CD8-positive, alpha-beta T cell (primary cell): ENCODE measurements at regions of chr17 and their contacts with region 1.

Region 1: DNA sequence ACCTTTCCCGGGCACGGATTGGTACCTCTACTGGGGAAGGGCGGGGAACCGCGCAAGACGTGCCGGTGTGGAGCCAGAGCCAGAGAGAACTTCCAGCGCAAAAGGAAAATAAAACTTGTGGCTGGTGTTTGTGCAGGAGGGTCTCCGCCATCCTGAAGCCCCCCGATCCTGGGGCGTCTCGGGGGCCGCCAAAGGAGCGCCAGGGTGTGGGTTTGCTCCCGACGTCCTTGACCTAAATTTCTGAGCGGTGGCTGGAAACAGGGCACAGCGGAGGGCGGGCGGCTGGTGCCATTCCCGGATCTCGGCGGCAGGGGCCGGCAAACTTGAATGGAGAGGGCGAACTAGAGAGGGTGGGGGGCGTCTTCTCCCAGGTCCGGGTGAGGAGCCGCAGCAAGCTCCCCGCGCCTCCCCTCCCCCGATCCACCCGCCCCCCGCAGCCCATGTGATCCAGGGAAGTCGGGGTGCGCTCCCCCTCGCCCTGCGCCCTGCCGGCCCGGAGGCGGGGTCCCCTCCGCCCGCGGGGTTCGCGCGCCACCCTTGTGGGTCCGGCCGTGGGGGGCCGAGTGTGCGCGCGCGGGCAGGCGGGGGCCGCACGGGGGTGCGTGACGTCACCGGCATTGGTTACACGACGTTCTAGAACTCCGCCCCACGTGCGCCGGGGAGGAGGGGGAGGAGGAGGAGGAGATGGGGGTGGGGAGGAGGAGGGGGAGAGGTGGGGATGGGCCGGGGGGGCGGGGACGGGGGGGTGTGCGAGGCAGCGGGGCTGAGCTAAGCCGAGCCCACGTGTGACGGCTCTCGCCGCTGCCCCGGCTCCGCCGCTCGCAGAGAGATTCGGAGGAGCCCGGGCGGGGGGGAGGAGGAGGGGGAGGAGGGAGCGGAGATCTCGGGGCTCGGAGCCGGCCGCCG is at the start of gene MSI2:
- DNase-seq: peak; percentile 87 to 97 (median 92)
- ATAC-seq: peak; percentile 76
- H3K4me3 ChIP-seq: peak within 1 kb of the TSS; percentile 73 to 81
- H3K4me3 Mint-ChIP-seq: peak within 1 kb of the TSS; percentile 92
- H3K27ac ChIP-seq: peak within 1 kb of the TSS; percentile 64 to 84
- H3K27ac Mint-ChIP-seq: peak within 1 kb of the TSS; percentile 93
- H3K4me1 ChIP-seq: peaks cover 37% of the 10 kb centered on the region
- H3K4me1 Mint-ChIP-seq: peaks cover 49% of the 10 kb centered on the region
- H3K27me3 ChIP-seq: no peaks in the 10 kb centered on the region
- H3K27me3 Mint-ChIP-seq: no peaks in the 10 kb centered on the region
- CTCF ChIP-seq: no peak
- total RNA-seq, gene MSI2: 130 to 135 TPM

Region 2: DNA sequence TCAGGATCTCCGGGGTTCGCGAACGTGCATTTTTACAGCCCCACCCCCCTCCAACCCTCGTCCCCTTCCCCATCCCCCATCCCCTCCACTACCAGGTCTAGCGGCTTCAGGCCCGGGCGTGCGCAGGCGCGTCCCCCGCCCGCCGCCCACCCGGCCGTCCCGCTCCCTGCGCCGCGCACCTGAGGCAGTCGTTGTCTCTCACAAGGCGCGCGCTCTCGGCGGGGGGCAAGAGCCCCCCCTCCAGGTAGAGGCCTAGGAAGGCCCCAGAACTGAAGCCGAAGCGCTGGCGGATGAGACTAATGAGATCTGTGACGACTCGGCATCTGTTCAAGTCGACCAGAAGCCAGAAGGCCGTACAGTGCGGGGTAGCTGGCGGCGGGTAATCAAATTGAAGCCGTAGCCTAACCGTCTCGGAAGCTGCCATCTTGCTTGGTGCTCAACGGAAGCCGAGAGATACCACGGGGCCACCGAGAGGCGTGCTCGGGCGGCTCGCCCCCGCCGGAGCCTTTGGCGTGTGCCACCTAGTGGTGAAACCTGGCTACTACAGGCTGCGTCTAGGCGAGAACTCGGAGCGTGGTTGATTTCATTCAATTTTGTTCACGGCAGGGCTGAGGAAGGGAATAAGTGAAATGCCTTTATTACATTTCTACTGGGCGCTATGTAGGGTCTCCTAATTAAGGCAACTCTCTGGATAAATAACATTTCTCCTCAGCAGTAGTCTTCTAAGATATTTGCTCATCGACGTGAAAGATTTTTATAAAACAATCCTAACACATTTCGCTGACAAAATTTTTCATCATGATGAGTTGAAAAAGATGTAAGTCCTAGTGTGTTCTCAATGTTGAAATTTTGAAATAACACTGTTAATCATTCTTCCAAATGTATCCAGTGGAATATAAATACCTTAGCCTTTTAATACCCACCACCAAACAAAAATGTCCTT is 295.2 kb before region 1 on chr17 and contains the start of gene COIL:
- CTCF ChIA-PET with region 1: no interaction called
- POLR2A ChIA-PET with region 1: no interaction called
- intact Hi-C with region 1: loop called in 1 of 2 experiments (anchors 5 kb)
- DNase-seq: peak; percentile 85 to 96 (median 93)
- ATAC-seq: peak; percentile 98
- H3K4me3 ChIP-seq: peak within 1 kb of the TSS; percentile 65 to 89
- H3K4me3 Mint-ChIP-seq: peak within 1 kb of the TSS; percentile 89
- H3K27ac ChIP-seq: peak within 1 kb of the TSS; percentile 78 to 79
- H3K27ac Mint-ChIP-seq: peak within 1 kb of the TSS; percentile 96
- H3K4me1 ChIP-seq: peaks cover 22% of the 10 kb centered on the region
- H3K4me1 Mint-ChIP-seq: peaks cover 25% of the 10 kb centered on the region
- H3K27me3 ChIP-seq: no peaks in the 10 kb centered on the region
- H3K27me3 Mint-ChIP-seq: no peaks in the 10 kb centered on the region
- CTCF ChIP-seq: peak; percentile 99
- total RNA-seq, gene COIL: 24.1 to 24.3 TPM

Region 3: GRCh38 chr17:57294629-57295535 is 38.9 kb after region 1 on chr17:
- CTCF ChIA-PET with region 1: no interaction called
- POLR2A ChIA-PET with region 1: no interaction called
- intact Hi-C with region 1: loop called (anchors 1 to 5 kb)
- DNase-seq: peak in 8 of 9 experiments; percentile 39 to 69 (median 56)
- ATAC-seq: peak; percentile 95
- H3K4me3 ChIP-seq: no peak overlapping the region
- H3K4me3 Mint-ChIP-seq: peak overlapping the region; percentile 36
- H3K27ac ChIP-seq: no peak overlapping the region
- H3K27ac Mint-ChIP-seq: peak overlapping the region; percentile 83
- H3K4me1 ChIP-seq: peaks cover 20% of the 10 kb centered on the region
- H3K4me1 Mint-ChIP-seq: peaks cover 43% of the 10 kb centered on the region
- H3K27me3 ChIP-seq: no peaks in the 10 kb centered on the region
- H3K27me3 Mint-ChIP-seq: no peaks in the 10 kb centered on the region
- CTCF ChIP-seq: no peak

Region 4: GRCh38 chr17:57328093-57328882 is 72.3 kb after region 1 on chr17:
- CTCF ChIA-PET with region 1: no interaction called
- POLR2A ChIA-PET with region 1: no interaction called
- intact Hi-C with region 1: no loop called
- DNase-seq: no peak
- ATAC-seq: no peak
- H3K4me3 ChIP-seq: no peak overlapping the region
- H3K4me3 Mint-ChIP-seq: no peak overlapping the region
- H3K27ac ChIP-seq: no peak overlapping the region
- H3K27ac Mint-ChIP-seq: no peak overlapping the region
- H3K4me1 ChIP-seq: no peaks in the 10 kb centered on the region
- H3K4me1 Mint-ChIP-seq: peaks cover 34% of the 10 kb centered on the region
- H3K27me3 ChIP-seq: no peaks in the 10 kb centered on the region
- H3K27me3 Mint-ChIP-seq: no peaks in the 10 kb centered on the region
- CTCF ChIP-seq: no peak

Region 5: GRCh38 chr17:57671667-57672632 is 415.9 kb after region 1 on chr17:
- CTCF ChIA-PET with region 1: interaction called, 6 read pairs
- POLR2A ChIA-PET with region 1: no interaction called
- intact Hi-C with region 1: loop called (anchors 5 kb)
- DNase-seq: peak; percentile 46 to 87 (median 75)
- ATAC-seq: peak; percentile 87
- H3K4me3 ChIP-seq: no peak overlapping the region
- H3K4me3 Mint-ChIP-seq: peak overlapping the region; percentile 54
- H3K27ac ChIP-seq: peak overlapping the region; percentile 28 to 45
- H3K27ac Mint-ChIP-seq: peak overlapping the region; percentile 91
- H3K4me1 ChIP-seq: peaks cover 36% of the 10 kb centered on the region
- H3K4me1 Mint-ChIP-seq: peaks cover 45% of the 10 kb centered on the region
- H3K27me3 ChIP-seq: no peaks in the 10 kb centered on the region
- H3K27me3 Mint-ChIP-seq: no peaks in the 10 kb centered on the region
- CTCF ChIP-seq: peak; percentile 81

Region 6: GRCh38 chr17:58082870-58083490 is 827.0 kb after region 1 on chr17 and contains the start of gene DYNLL2:
- CTCF ChIA-PET with region 1: no interaction called
- POLR2A ChIA-PET with region 1: no interaction called
- intact Hi-C with region 1: loop called (anchors 2 to 5 kb)
- DNase-seq: peak; percentile 76 to 93 (median 88)
- ATAC-seq: peak; percentile 69
- H3K4me3 ChIP-seq: peak within 1 kb of the TSS; percentile 60 to 62
- H3K4me3 Mint-ChIP-seq: peak within 1 kb of the TSS; percentile 89
- H3K27ac ChIP-seq: peak within 1 kb of the TSS; percentile 81 to 85
- H3K27ac Mint-ChIP-seq: peak within 1 kb of the TSS; percentile 88
- H3K4me1 ChIP-seq: peaks cover 33% of the 10 kb centered on the region
- H3K4me1 Mint-ChIP-seq: peaks cover 33% of the 10 kb centered on the region
- H3K27me3 ChIP-seq: no peaks in the 10 kb centered on the region
- H3K27me3 Mint-ChIP-seq: no peaks in the 10 kb centered on the region
- CTCF ChIP-seq: no peak
- total RNA-seq, gene DYNLL2: 30.5 to 30.6 TPM

Region 7: GRCh38 chr17:59220376-59221158 is 1964.5 kb after region 1 on chr17 and contains the start of gene GDPD1:
- CTCF ChIA-PET with region 1: no interaction called
- POLR2A ChIA-PET with region 1: no interaction called
- intact Hi-C with region 1: loop called in 1 of 2 experiments (anchors 5 kb)
- DNase-seq: peak; percentile 94 to 99 (median 97)
- ATAC-seq: peak; percentile 96
- H3K4me3 ChIP-seq: peak within 1 kb of the TSS; percentile 97 to 100
- H3K4me3 Mint-ChIP-seq: peak within 1 kb of the TSS; percentile 98
- H3K27ac ChIP-seq: peak within 1 kb of the TSS; percentile 91 to 92
- H3K27ac Mint-ChIP-seq: peak within 1 kb of the TSS; percentile 99
- H3K4me1 ChIP-seq: peaks cover 4% of the 10 kb centered on the region
- H3K4me1 Mint-ChIP-seq: peaks cover 13% of the 10 kb centered on the region
- H3K27me3 ChIP-seq: no peaks in the 10 kb centered on the region
- H3K27me3 Mint-ChIP-seq: no peaks in the 10 kb centered on the region
- CTCF ChIP-seq: peak; percentile 71
- total RNA-seq, gene GDPD1: 1.1 to 1.8 TPM